A673 (cell line): ENCODE measurements at regions of chr16 and their contacts with region 1.

Region 1: DNA sequence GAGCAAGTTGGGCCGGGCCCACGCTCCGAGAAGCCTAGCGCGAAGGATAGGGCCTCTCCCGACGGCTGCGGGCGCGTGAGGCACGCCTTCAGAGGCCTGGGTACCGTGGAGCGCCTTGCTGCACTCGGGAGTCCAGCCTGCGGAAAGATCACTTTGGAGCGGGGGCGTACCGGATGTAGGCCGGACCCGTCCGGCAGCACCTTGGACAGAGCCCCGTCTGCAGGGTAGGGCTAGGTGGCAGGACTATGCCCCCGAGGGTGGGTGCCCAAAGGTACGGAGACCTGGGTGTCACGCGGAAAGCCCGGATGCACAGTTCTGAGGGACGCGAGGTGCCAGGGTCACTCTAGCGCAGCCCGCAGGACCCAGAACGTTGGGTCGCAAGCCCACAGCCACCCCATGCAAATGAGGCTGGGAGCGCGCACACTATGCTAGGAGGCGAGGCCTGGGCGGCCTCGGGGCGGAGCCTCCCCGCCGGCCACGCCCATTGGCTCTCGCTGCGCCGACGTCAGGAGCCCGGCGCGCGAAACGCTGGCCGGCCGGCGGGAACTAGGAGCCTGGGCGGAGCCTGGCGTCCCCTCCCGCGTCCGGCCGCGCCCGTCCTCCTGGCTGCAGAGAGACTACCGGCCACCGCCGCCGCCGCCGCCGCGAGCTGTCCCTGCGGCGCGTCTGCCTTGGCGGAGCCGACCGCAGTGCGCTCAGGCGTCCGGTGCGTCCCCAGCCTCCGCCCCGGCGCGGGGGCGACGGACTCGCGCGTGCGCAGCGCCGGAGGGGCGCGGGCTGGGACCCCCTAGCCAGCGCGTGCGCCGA is at the start of gene PAQR4:
- DNase-seq: peak; percentile 93
- H3K4me3 ChIP-seq: peak within 1 kb of the TSS; percentile 86
- H3K27ac ChIP-seq: peak within 1 kb of the TSS; percentile 84
- H3K4me1 ChIP-seq: peaks cover 28% of the 10 kb centered on the region
- H3K27me3 ChIP-seq: no peaks in the 10 kb centered on the region
- CTCF ChIP-seq: no peak
- total RNA-seq, gene PAQR4: 46.5 and 49.7 TPM in 2 replicates

Region 2: DNA sequence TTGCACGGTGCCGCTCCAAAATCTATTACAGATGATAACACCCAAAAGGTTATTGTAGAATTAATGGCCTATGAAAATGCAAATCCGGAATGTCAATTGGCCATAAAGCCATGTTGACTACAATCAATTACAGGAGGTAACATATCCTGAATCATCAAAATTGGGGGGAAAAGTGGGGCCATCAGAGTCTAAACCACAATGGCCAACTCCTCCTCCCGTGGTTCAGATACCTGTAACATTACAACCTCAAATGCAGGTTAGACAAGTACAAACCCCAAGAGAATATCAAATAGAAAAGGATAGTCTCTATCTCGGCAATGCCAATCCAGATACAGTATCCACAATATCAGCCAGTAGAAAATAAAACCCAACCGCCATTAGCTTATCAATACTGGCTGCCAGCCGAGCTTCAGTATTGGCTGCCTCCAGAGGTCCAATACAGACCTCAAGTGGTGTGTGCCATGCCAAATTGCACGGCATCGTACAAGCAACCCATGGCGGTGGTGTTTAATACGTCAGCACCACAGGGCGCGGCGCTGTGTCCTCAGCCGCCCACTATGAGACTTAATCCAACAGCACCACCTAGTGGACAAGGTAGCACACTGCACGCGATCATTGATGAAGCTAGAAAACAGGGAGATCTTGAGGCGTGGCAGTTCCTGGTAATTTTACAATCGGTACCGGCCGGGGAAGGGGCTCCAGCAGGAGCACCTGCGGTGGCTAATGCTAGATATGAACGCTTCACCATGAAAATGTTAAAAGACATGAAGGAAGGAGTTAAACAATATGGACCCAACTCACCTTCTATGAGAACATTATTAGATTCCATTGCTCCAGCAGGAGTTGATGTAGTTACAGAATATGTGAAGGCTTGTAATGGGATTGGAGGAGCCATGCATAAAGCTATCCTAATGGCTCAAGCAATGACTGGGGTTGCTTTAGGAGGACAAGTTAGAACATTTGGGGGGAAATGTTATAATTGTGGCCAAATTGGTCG is 42.0 kb before region 1 on chr16:
- CTCF ChIA-PET with region 1: interaction called, 7 read pairs
- POLR2A ChIA-PET with region 1: no interaction called
- intact Hi-C with region 1: loop called (anchors 5 kb)
- DNase-seq: peak; percentile 94
- H3K4me3 ChIP-seq: no peak overlapping the region
- H3K27ac ChIP-seq: no peak overlapping the region
- H3K4me1 ChIP-seq: peaks cover 5% of the 10 kb centered on the region
- H3K27me3 ChIP-seq: no peaks in the 10 kb centered on the region
- CTCF ChIP-seq: peak; percentile 97

Region 3: DNA sequence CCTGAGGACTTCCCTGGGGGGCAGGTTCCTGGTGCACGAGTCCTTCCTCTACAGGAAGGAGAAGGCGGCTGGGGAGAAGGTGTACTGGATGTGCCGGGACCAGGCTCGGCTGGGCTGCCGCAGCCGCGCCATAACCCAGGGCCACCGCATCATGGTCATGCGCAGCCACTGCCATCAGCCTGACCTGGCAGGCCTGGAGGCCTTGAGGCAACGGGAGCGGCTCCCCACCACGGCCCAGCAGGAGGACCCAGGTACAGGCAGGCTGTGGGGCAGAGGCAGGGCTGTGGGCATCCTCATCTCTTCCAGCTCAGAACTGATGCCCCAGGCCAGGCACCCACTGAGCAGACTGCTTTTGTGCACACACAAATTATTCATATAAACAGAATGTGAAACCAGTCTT is 30.7 kb before region 1 on chr16:
- CTCF ChIA-PET with region 1: no interaction called
- POLR2A ChIA-PET with region 1: no interaction called
- intact Hi-C with region 1: no loop called
- DNase-seq: no peak
- H3K4me3 ChIP-seq: no peak overlapping the region
- H3K27ac ChIP-seq: no peak overlapping the region
- H3K4me1 ChIP-seq: no peaks in the 10 kb centered on the region
- H3K27me3 ChIP-seq: no peaks in the 10 kb centered on the region
- CTCF ChIP-seq: no peak

Region 4: GRCh38 chr16:2982402-2982801 is 13.5 kb after region 1 on chr16:
- CTCF ChIA-PET with region 1: no interaction called
- POLR2A ChIA-PET with region 1: interaction called, 12 read pairs
- intact Hi-C with region 1: no loop called
- DNase-seq: no peak
- H3K4me3 ChIP-seq: no peak overlapping the region
- H3K27ac ChIP-seq: no peak overlapping the region
- H3K4me1 ChIP-seq: peaks cover 10% of the 10 kb centered on the region
- H3K27me3 ChIP-seq: no peaks in the 10 kb centered on the region
- CTCF ChIP-seq: no peak

Region 5: DNA sequence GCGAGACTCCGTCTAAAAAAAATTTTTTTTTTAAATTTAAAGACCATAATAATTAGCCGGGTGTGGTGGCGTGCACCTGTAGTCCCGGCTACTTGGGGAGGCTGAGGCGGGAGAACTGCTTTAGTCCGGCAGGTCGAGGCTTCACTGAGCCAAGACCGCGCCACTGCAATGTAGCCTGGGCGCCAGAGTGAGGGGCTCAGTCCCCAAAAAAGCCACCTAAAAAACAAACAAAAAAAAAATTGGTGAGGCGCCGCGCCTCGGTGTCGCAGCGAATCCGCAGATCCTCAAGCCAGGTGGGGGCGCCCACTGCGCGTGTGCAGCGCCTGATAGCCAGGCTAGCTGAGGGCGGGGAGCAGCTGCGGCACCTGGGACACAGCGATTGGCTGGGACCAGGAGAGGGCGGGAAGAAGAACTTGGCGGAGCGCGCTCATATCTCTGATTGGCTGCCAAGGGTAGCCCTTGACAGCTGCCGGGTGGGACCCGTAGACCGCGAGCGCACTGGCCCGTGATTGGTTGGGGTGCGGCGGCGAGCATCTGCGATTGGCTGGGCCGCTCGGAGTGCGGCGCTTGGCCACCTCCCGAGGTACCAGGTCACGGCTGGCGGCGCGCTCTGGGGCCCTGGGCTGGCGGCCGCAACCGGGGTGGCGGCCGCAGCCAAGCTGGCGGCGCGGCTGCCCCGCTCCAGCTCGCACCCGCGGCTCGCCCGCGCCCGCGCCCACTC is 34.8 kb after region 1 on chr16:
- CTCF ChIA-PET with region 1: no interaction called
- POLR2A ChIA-PET with region 1: no interaction called
- intact Hi-C with region 1: loop called (anchors 1 kb)
- DNase-seq: peak; percentile 99
- H3K4me3 ChIP-seq: no peak overlapping the region
- H3K27ac ChIP-seq: no peak overlapping the region
- H3K4me1 ChIP-seq: peaks cover 4% of the 10 kb centered on the region
- H3K27me3 ChIP-seq: peaks cover 67% of the 10 kb centered on the region
- CTCF ChIP-seq: peak; percentile 72